ENCODE measurements at regions of chr3 and their contacts with region 1.

Region 1: GRCh38 chr3:87167628-87168456 is 59.3 kb upstream of the CHMP2B start:
- DNase-seq: peak; percentile 15
- ATAC-seq: peak; percentile 78
- H3K4me3 ChIP-seq: no peak overlapping the region
- H3K27ac ChIP-seq: no peak overlapping the region
- H3K4me1 ChIP-seq: no peaks in the 10 kb centered on the region
- H3K27me3 ChIP-seq: no peaks in the 10 kb centered on the region; a peak in 1 of 4 replicates
- CTCF ChIP-seq: peak; percentile 59 to 61 (median 61); a peak in 5 of 6 replicates
- EP300 ChIP-seq: no peak
- POLR2A ChIP-seq: no peak
- RAD21 ChIP-seq: peak; percentile 46; the same call in 1 of the 2 replicates

Region 2: GRCh38 chr3:86774082-86774691 is 393.7 kb before region 1 on chr3:
- CTCF ChIA-PET with region 1: interaction called, 26 read pairs
- POLR2A ChIA-PET with region 1: no interaction called
- RAD21 ChIA-PET with region 1: interaction called, 4 read pairs
- SMC1A ChIA-PET with region 1: interaction called, 3 read pairs
- in situ Hi-C with region 1: loop called (anchors 25 kb)
- intact Hi-C with region 1: loop called (anchors 2 kb)
- DNase-seq: no peak
- ATAC-seq: peak; percentile 39; the same call in 1 of the 3 replicates
- H3K4me3 ChIP-seq: no peak overlapping the region
- H3K27ac ChIP-seq: no peak overlapping the region
- H3K4me1 ChIP-seq: no peaks in the 10 kb centered on the region
- H3K27me3 ChIP-seq: no peaks in the 10 kb centered on the region; a peak in 1 of 4 replicates
- CTCF ChIP-seq: peak in 2 of 3 experiments; percentile 16 to 26; a peak in 2 of 6 replicates
- EP300 ChIP-seq: no peak
- POLR2A ChIP-seq: no peak
- RAD21 ChIP-seq: peak; percentile 28; the same call in 1 of the 2 replicates

Region 3: DNA sequence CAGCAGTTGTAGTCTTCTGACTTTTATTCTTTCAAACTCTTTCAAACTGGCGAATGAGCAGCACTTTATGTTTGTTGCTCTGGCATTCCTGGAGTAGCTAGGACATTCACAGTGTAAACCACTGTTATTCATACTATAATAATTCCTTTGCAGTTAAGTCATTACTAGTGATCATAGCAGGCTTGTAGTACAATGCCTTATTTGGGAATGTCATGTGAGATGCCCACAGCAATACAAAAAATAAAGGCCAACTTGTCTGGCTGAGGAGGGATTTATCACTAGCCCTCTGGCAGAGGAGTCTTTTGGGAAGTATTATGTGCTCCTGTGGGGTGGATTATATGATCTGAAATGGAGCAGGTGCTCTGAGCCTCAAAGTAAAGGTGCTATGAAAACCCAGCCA is 374.1 kb before region 1 on chr3:
- CTCF ChIA-PET with region 1: no interaction called
- POLR2A ChIA-PET with region 1: no interaction called
- RAD21 ChIA-PET with region 1: no interaction called
- SMC1A ChIA-PET with region 1: no interaction called
- in situ Hi-C with region 1: loop called (anchors 25 kb)
- intact Hi-C with region 1: no loop called
- DNase-seq: no peak
- ATAC-seq: no peak
- H3K4me3 ChIP-seq: no peak overlapping the region
- H3K27ac ChIP-seq: no peak overlapping the region
- H3K4me1 ChIP-seq: no peaks in the 10 kb centered on the region
- H3K27me3 ChIP-seq: no peaks in the 10 kb centered on the region
- CTCF ChIP-seq: no peak
- EP300 ChIP-seq: no peak
- POLR2A ChIP-seq: no peak
- RAD21 ChIP-seq: no peak

Region 4: DNA sequence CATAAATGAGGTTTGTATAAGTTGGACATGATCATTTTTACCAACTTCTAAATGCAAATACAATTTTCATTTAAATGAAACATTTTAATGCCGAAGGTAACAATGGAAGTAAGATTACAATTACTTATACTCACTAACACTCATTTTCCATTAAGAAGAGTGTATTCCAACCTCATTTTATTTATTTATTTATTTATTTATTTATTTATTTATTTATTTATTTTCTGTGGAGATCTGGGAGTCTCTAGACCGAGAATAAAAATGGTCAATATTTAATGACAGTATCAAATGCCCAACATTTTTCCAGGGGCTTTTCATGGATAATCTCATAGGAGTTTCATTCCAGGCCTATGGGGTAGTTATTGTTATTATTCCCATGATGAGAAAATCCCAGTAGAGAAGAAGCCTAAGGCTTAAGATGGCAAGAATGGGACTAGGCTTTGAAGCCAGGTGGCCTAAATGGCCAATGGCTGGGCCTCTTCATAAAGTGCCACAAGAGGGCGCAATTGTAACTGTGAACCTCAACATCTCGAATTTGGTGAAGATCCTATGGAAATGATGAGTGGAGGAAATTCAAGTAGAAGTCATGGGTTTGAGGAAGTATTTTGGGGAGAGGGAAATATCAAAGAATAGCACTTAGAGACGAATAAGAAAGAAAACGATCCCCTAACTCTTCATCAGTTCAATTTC is 198.2 kb before region 1 on chr3:
- CTCF ChIA-PET with region 1: interaction called, 8 read pairs
- POLR2A ChIA-PET with region 1: no interaction called
- RAD21 ChIA-PET with region 1: interaction called, 4 read pairs
- SMC1A ChIA-PET with region 1: interaction called, 9 read pairs
- in situ Hi-C with region 1: loop called (anchors 25 kb)
- intact Hi-C with region 1: loop called (anchors 1 kb)
- DNase-seq: no peak
- ATAC-seq: peak; percentile 80
- H3K4me3 ChIP-seq: no peak overlapping the region
- H3K27ac ChIP-seq: no peak overlapping the region
- H3K4me1 ChIP-seq: no peaks in the 10 kb centered on the region
- H3K27me3 ChIP-seq: no peaks in the 10 kb centered on the region
- CTCF ChIP-seq: peak; percentile 66 to 79 (median 72)
- EP300 ChIP-seq: no peak
- POLR2A ChIP-seq: no peak
- RAD21 ChIP-seq: peak; percentile 62

Region 5: DNA sequence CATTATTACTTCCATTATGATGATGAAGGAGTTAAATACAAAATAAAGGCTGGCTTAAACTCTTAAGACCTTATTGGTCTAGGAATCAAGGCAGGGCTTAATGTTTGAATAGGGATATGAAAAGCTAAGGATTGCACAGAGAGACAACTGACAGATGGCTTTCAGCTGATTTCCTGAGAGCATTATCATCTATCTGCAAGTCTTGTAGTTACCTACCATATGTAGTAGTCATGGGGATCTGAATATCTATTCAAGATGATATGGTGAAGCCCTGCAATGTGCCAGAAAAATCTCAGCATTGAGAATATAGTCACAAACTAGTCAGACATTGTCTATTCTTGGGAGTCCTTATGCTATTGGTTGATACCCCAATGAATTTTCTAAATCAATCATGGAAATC is 11.8 kb after region 1 on chr3:
- CTCF ChIA-PET with region 1: interaction called, 15 read pairs
- POLR2A ChIA-PET with region 1: no interaction called
- RAD21 ChIA-PET with region 1: no interaction called
- SMC1A ChIA-PET with region 1: interaction called, 5 read pairs
- in situ Hi-C with region 1: no loop called
- intact Hi-C with region 1: no loop called
- DNase-seq: no peak
- ATAC-seq: no peak
- H3K4me3 ChIP-seq: no peak overlapping the region
- H3K27ac ChIP-seq: no peak overlapping the region
- H3K4me1 ChIP-seq: no peaks in the 10 kb centered on the region
- H3K27me3 ChIP-seq: no peaks in the 10 kb centered on the region
- CTCF ChIP-seq: no peak
- EP300 ChIP-seq: no peak
- POLR2A ChIP-seq: no peak
- RAD21 ChIP-seq: no peak

Region 6: GRCh38 chr3:87219611-87220010 is 51.8 kb after region 1 on chr3:
- CTCF ChIA-PET with region 1: no interaction called
- POLR2A ChIA-PET with region 1: no interaction called
- RAD21 ChIA-PET with region 1: no interaction called
- SMC1A ChIA-PET with region 1: no interaction called
- in situ Hi-C with region 1: no loop called
- intact Hi-C with region 1: no loop called
- DNase-seq: no peak
- ATAC-seq: no peak
- H3K4me3 ChIP-seq: no peak overlapping the region
- H3K27ac ChIP-seq: no peak overlapping the region
- H3K4me1 ChIP-seq: no peaks in the 10 kb centered on the region
- H3K27me3 ChIP-seq: no peaks in the 10 kb centered on the region
- CTCF ChIP-seq: no peak
- EP300 ChIP-seq: no peak
- POLR2A ChIP-seq: no peak
- RAD21 ChIP-seq: no peak